AG04450 (cell line): ENCODE measurements at regions of chr7 and their contacts with region 1.

Region 1: GRCh38 chr7:113026941-113027340 is 59.7 kb downstream of the GPR85 start:
- DNase-seq: no peak
- H3K4me3 ChIP-seq: no peak overlapping the region
- H3K27ac ChIP-seq: no peak overlapping the region
- H3K27me3 ChIP-seq: no peaks in the 10 kb centered on the region
- CTCF ChIP-seq: no peak

Region 2: DNA sequence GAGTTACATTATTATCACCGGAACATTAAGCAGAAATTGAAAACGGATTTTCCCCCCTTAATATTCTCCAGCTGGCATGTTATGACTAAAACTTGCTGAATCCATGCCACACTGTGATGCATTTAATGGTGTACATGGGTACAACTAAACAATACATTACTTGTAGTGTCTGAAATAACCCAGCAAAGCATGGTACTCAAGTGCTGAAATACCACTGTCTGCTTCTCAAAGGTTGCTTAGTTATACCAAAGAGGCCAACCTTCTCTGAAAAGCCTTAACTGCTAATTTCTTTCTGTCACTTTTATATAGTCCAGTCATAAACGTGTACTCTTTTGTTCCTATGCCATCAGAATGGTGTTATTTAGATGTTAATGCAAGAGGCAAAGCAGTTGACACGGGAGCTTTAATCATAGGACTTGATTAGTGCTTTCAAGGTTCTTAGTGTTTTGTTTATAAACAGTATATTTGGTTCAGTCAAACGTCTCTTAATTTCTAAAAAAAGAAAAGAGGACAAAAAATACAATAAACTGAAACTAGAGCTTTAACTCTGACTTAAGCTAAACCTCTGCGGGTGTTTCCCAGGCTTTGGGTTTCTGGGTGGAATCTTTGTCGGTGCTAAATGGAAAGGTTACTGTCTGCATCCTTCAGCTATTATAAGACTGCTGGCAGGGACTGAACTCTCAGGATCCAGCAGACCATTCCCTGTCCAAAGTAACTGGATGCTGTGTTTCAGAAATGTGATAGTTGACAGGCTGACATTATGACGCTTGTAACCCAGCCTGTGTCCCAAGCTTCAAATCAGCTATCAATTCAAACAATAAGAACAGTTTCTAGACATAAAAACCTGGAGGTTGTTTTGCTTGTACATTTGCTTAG is 689.3 kb after region 1 on chr7:
- CTCF ChIA-PET with region 1: no interaction called
- POLR2A ChIA-PET with region 1: interaction called, 10 read pairs
- DNase-seq: no peak
- H3K4me3 ChIP-seq: no peak overlapping the region
- H3K27ac ChIP-seq: no peak overlapping the region
- H3K27me3 ChIP-seq: no peaks in the 10 kb centered on the region
- CTCF ChIP-seq: no peak